T-cell (primary cell): ENCODE measurements at regions of chr17 and their contacts with region 1.

Region 1: GRCh38 chr17:78027121-78027520 is 68.6 kb downstream of the TNRC6C start:
- DNase-seq: no peak
- ATAC-seq: no peak
- H3K4me3 ChIP-seq: no peak overlapping the region
- H3K4me3 Mint-ChIP-seq: no peak overlapping the region
- H3K27ac ChIP-seq: no peak overlapping the region
- H3K27ac Mint-ChIP-seq: peak overlapping the region; percentile 17 to 66
- H3K4me1 ChIP-seq: peaks cover 0 to 6% of the 10 kb centered on the region in 2 experiments
- H3K4me1 Mint-ChIP-seq: peaks cover 25 to 41% (median 30%) of the 10 kb centered on the region in 3 donors
- H3K27me3 ChIP-seq: no peaks in the 10 kb centered on the region
- H3K27me3 Mint-ChIP-seq: no peaks in the 10 kb centered on the region

Region 2: GRCh38 chr17:77891602-77892001 is 135.5 kb before region 1 on chr17:
- CTCF ChIA-PET with region 1: interaction called in 1 of 2 experiments, 10 read pairs
- POLR2A ChIA-PET with region 1: no interaction called
- DNase-seq: no peak
- ATAC-seq: no peak
- H3K4me3 ChIP-seq: no peak overlapping the region
- H3K4me3 Mint-ChIP-seq: no peak overlapping the region
- H3K27ac ChIP-seq: no peak overlapping the region
- H3K27ac Mint-ChIP-seq: no peak overlapping the region
- H3K4me1 ChIP-seq: peaks cover 7 to 47% of the 10 kb centered on the region in 2 experiments
- H3K4me1 Mint-ChIP-seq: peaks cover 36 to 46% (median 36%) of the 10 kb centered on the region in 3 donors
- H3K27me3 ChIP-seq: no peaks in the 10 kb centered on the region
- H3K27me3 Mint-ChIP-seq: no peaks in the 10 kb centered on the region

Region 3: DNA sequence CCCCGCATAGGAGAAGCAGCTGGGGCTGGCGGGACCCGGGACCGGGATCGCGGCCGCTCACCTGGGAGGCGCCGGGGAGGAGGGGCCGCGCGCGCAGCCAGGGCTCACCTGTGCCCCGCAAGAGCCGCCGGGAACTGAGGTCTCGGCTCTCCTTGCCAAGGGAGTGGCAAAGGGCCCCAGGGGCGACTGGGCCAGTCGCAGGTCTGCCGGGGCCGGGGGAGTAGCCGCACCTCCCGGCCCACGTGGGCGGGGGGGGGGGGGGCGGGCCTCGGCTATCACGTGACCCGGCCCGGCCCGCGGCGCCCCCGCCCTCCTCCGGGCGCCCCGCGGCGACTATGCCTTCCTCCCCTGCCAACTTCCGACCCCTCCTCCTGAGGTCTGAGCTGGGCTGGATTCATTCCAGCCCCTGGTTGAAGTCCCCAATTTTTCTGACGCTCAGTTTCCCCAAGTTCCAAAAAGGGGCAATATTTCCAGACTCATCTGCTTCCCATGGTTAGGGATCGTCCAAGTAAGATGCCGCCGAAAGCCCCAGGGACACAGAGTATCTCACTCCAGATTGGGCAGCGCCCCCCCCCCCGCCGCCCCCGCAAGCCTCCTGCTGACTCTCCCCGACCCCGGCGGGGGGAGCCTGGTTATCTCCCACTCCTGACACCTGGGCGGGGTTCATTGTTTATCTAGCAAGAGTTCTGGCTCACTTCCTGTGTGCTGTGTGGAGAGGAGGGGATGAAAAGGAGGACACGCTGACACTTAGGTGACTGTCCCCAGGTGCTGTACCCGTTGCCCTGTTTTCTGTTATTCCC is 101.6 kb after region 1 on chr17 and contains the start of gene TMC6:
- CTCF ChIA-PET with region 1: no interaction called
- POLR2A ChIA-PET with region 1: no interaction called
- DNase-seq: peak; percentile 59 to 88 (median 75)
- ATAC-seq: peak; percentile 29 to 42 (median 34)
- H3K4me3 ChIP-seq: peak within 1 kb of the TSS; percentile 83 to 92
- H3K4me3 Mint-ChIP-seq: peak within 1 kb of the TSS; percentile 98 to 99 (median 99)
- H3K27ac ChIP-seq: peak within 1 kb of the TSS; percentile 79
- H3K27ac Mint-ChIP-seq: peak within 1 kb of the TSS; percentile 97 to 100
- H3K4me1 ChIP-seq: peaks cover 42 to 73% of the 10 kb centered on the region in 2 experiments
- H3K4me1 Mint-ChIP-seq: peaks cover 48 to 61% (median 51%) of the 10 kb centered on the region in 3 donors
- H3K27me3 ChIP-seq: no peaks in the 10 kb centered on the region
- H3K27me3 Mint-ChIP-seq: no peaks in the 10 kb centered on the region
- total RNA-seq, gene TMC6: 616 to 847 (median 698) TPM

Region 4: GRCh38 chr17:78197147-78197832 is 170.2 kb after region 1 on chr17:
- CTCF ChIA-PET with region 1: no interaction called
- POLR2A ChIA-PET with region 1: interaction called in 1 of 2 experiments, 10 read pairs
- DNase-seq: no peak
- ATAC-seq: no peak
- H3K4me3 ChIP-seq: no peak overlapping the region
- H3K4me3 Mint-ChIP-seq: no peak overlapping the region
- H3K27ac ChIP-seq: no peak overlapping the region
- H3K27ac Mint-ChIP-seq: no peak overlapping the region
- H3K4me1 ChIP-seq: no peaks in the 10 kb centered on the region
- H3K4me1 Mint-ChIP-seq: peaks cover 0 to 2% (median 0%) of the 10 kb centered on the region in 3 donors
- H3K27me3 ChIP-seq: no peaks in the 10 kb centered on the region
- H3K27me3 Mint-ChIP-seq: no peaks in the 10 kb centered on the region